ENCODE measurements at regions of chr4 and their contacts with region 1.

Region 1: DNA sequence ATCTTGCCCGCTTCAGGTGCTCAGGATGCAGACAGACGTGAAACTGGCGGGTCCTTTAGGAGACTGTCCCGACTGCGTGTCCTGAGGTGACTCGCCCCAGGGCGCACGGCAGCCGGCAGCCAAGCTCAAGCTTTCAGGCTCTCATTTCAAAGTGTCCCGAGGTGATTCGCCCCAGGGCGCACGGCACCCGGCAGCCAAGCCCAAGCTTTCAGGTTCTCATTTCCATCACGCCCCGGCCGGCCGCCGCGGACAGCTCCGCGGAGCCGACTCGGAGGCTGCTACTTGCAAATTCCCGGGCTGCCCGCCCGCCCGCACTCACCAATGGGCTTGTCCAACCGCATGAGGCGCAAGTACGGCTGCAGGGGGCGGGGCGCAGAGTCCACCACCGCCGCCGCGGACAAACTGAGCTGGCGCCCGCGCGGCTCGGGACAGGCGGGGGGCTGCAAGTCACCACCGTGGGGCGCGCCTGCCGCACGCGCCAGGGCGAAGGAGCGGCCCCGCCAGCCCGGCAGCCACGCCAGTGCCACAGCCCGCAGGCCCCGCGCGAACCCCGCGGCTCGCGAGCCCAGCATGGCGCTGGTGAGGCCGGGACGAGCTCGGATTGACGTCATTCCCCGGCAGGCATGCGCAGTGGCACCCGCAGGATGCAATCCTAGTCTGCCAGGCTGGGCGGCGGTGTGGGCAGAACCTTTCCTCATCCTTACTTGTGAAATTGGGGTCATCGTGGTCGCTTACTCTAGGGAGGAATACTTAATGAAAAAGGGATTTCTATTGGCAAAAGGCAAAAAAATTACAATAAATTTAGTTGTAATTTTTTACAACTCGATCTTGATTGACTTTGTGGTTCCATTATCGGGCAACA is at the start of gene COQ2:
- DNase-seq: peak; percentile 89 to 92
- ATAC-seq: peak; percentile 94 to 95
- H3K4me3 ChIP-seq: peak within 1 kb of the TSS; percentile 62
- H3K27ac ChIP-seq: peak within 1 kb of the TSS; percentile 98 to 99
- H3K4me1 ChIP-seq: peaks cover 20% of the 10 kb centered on the region; the same call in 2 of the 3 replicates
- CTCF ChIP-seq: peak; percentile 8; the same call in 1 of the 3 replicates
- EP300 ChIP-seq: no peak
- POLR2A ChIP-seq: peak; percentile 90
- RAD21 ChIP-seq: peak in 1 of 2 experiments; percentile 35; a peak in 2 of 5 replicates
- polyA plus RNA-seq, gene COQ2: 27.1 and 35.9 TPM in 2 replicates

Region 2: GRCh38 chr4:83012687-83013419 is 271.6 kb before region 1 on chr4:
- CTCF ChIA-PET with region 1: no interaction called
- POLR2A ChIA-PET with region 1: interaction called, 10 read pairs
- DNase-seq: peak; percentile 79 to 97
- ATAC-seq: peak; percentile 83 to 90
- H3K4me3 ChIP-seq: peak overlapping the region; percentile 80
- H3K27ac ChIP-seq: peak overlapping the region; percentile 84 to 96
- H3K4me1 ChIP-seq: peaks cover 23% of the 10 kb centered on the region
- CTCF ChIP-seq: no peak; the same call in 2 of the 3 replicates
- EP300 ChIP-seq: no peak
- POLR2A ChIP-seq: peak; percentile 69
- RAD21 ChIP-seq: peak in 1 of 2 experiments; percentile 34; a peak in 2 of 5 replicates

Region 3: DNA sequence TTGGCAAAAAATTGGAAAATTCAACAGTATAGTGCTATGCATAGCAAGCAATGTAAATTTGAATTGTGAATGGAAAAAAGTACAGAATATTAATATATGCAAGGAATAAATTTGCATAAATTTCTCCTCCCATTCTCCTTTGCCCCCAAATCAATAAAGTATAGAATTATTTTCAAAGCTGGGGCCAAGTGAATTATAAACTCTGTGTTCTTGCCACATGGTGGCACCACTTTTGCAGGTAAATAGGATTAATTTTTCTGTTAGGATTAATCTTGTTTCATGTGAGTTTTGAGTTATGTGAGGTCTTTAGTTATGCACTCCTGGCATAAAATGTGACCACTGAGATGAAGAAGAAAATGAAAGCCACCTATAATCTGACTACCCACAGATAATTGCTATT is 229.5 kb before region 1 on chr4:
- CTCF ChIA-PET with region 1: interaction called, 10 read pairs
- POLR2A ChIA-PET with region 1: interaction called, 4 read pairs
- DNase-seq: peak in 1 of 2 experiments; percentile 27
- ATAC-seq: no peak
- H3K4me3 ChIP-seq: no peak overlapping the region
- H3K27ac ChIP-seq: no peak overlapping the region
- H3K4me1 ChIP-seq: no peaks in the 10 kb centered on the region
- CTCF ChIP-seq: peak; percentile 55
- EP300 ChIP-seq: no peak
- POLR2A ChIP-seq: no peak
- RAD21 ChIP-seq: peak; percentile 61 to 69

Region 4: DNA sequence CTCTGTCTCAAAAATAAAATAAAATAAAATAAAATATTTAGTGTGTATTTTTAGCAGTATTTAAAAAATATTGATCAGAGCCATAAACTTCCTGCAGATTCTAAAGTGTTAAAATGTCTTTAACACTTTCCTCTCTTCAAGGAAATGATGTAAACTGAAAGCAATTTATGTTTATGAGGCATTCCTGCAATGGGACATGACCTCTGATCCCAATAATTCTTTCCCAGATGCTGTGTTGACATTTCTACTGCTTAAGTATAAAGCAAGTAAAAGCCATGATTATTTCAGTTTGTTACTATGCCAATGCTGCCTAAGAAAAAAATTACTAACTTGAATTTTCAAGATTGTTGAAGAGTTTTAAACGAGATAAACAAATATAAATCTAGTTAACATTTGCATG is 28.8 kb before region 1 on chr4:
- CTCF ChIA-PET with region 1: interaction called, 10 read pairs
- POLR2A ChIA-PET with region 1: interaction called, 4 read pairs
- DNase-seq: peak; percentile 32 to 81
- ATAC-seq: no peak
- H3K4me3 ChIP-seq: no peak overlapping the region; the same call in 2 of the 3 replicates
- H3K27ac ChIP-seq: peak overlapping the region; percentile 85 to 91
- H3K4me1 ChIP-seq: peaks cover 53% of the 10 kb centered on the region
- CTCF ChIP-seq: no peak
- EP300 ChIP-seq: peak; percentile 38 to 56; a peak in 3 of 5 replicates
- POLR2A ChIP-seq: no peak
- RAD21 ChIP-seq: no peak

Region 5: GRCh38 chr4:83272900-83273299 is 11.5 kb before region 1 on chr4:
- CTCF ChIA-PET with region 1: interaction called, 24 read pairs
- POLR2A ChIA-PET with region 1: interaction called, 14 read pairs
- DNase-seq: no peak
- ATAC-seq: no peak
- H3K4me3 ChIP-seq: no peak overlapping the region
- H3K27ac ChIP-seq: no peak overlapping the region
- H3K4me1 ChIP-seq: peaks cover 16% of the 10 kb centered on the region
- CTCF ChIP-seq: no peak
- EP300 ChIP-seq: no peak
- POLR2A ChIP-seq: no peak
- RAD21 ChIP-seq: no peak

Measured in A549 (cell line).